ENCODE measurements at regions of chr12 and their contacts with region 1.

Region 1: DNA sequence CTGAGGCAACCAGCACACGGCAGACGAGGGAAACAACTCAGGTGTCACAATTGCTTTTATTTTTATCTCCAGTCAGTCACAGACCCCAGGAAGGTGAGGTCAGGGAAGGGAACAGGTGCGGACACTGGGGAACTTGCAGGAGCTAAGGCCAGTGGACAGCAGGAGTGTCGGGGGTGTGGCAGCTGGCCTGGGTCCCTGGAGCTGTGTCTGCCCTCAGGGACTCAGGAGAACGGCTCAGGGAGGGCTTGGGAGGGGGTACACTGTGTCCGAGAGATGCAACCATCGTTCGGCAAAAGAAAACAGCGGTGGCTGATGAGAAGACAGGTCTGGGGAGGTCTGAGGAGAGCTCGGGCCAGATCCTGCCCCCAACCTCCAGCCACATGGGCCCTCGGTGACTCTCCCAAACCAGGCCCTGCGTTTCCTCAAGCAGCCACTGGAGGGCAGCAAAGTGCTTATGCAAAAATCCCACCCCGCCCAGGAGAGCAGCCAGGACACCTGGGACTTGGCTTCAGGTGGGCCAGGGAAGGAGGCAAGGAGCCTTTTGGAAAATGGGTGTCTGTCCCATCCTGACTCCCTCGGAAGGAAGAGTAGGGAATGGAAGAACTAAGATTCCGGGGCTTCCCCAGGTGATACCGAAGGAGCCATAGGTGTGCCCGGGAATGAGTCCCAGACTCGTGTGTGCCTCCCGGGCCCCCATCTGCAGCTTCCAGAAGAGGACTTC is 24.1 kb upstream of the BCDIN3D start:
- DNase-seq: no peak
- ATAC-seq: peak; percentile 96
- H3K4me3 ChIP-seq: no peak overlapping the region
- H3K27ac ChIP-seq: no peak overlapping the region
- H3K4me1 ChIP-seq: no peaks in the 10 kb centered on the region
- H3K27me3 ChIP-seq: no peaks in the 10 kb centered on the region; a peak in 2 of 4 replicates
- CTCF ChIP-seq: peak; percentile 94 to 99 (median 99); a peak in 5 of 6 replicates
- EP300 ChIP-seq: no peak
- POLR2A ChIP-seq: no peak
- RAD21 ChIP-seq: peak; percentile 74

Region 2: DNA sequence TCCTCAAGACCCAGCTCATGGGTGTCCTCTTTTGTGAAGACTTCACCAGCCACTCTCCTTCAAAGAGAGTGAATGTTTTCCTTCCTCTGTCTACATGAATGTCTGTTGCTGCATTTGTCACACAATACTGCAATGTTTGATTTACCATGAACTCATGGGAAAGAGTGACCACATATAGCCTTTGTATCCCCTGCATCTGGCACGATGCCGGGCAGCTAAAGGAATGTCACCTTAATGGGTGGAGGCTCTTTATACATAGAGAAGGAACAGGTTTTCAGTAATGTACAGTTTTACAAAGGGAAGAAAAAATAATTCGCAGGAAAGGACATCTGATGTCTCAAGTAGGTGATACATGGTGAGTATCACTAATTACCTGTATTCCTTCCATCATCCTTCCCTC is 12.0 kb before region 1 on chr12:
- CTCF ChIA-PET with region 1: interaction called, 12 read pairs
- POLR2A ChIA-PET with region 1: no interaction called
- RAD21 ChIA-PET with region 1: no interaction called
- SMC1A ChIA-PET with region 1: no interaction called
- in situ Hi-C with region 1: no loop called
- intact Hi-C with region 1: no loop called
- DNase-seq: no peak
- ATAC-seq: no peak
- H3K4me3 ChIP-seq: no peak overlapping the region
- H3K27ac ChIP-seq: no peak overlapping the region
- H3K4me1 ChIP-seq: no peaks in the 10 kb centered on the region
- H3K27me3 ChIP-seq: no peaks in the 10 kb centered on the region
- CTCF ChIP-seq: no peak
- EP300 ChIP-seq: no peak
- POLR2A ChIP-seq: no peak
- RAD21 ChIP-seq: no peak

Region 3: GRCh38 chr12:49901026-49901425 is 34.0 kb after region 1 on chr12:
- CTCF ChIA-PET with region 1: no interaction called
- POLR2A ChIA-PET with region 1: no interaction called
- RAD21 ChIA-PET with region 1: no interaction called
- SMC1A ChIA-PET with region 1: no interaction called
- in situ Hi-C with region 1: no loop called
- intact Hi-C with region 1: no loop called
- DNase-seq: no peak
- ATAC-seq: no peak
- H3K4me3 ChIP-seq: no peak overlapping the region
- H3K27ac ChIP-seq: no peak overlapping the region
- H3K4me1 ChIP-seq: no peaks in the 10 kb centered on the region
- H3K27me3 ChIP-seq: peaks cover 7 to 12% of the 10 kb centered on the region in 2 experiments
- CTCF ChIP-seq: no peak
- EP300 ChIP-seq: no peak
- POLR2A ChIP-seq: no peak
- RAD21 ChIP-seq: no peak

Region 4: DNA sequence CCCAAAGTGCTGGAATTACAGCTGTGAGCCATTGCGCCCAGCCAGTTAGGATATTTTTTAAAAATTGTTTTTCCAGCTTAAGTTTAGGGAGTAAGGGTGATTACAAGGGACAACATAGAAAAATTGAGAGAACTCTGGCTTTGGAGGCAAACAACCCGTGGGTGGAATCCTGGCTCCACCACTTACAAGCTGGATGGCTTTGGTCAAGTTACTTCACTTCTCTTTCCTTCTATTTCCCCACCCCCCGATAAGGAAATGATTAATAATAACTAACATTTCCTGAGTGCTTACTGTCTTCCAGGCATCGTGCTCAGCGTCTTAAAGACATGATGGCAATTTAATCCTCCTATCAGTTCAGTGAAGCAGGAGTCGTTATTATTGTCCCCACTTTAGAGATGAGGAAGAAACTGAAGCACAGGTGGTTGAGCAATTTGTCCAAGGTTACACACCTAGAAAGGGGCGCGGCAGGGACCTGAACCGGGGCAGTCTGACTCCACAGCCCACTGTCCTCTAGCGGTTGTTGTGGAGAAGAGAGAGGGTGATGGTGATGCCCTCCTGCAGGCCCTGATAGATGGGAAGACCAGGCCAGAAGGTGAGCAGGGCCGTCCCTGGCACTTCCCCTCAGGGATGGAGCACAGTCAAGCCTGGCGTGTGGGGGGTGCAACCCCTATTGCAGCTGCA is 53.4 kb after region 1 on chr12:
- CTCF ChIA-PET with region 1: no interaction called
- POLR2A ChIA-PET with region 1: no interaction called
- RAD21 ChIA-PET with region 1: no interaction called
- SMC1A ChIA-PET with region 1: no interaction called
- in situ Hi-C with region 1: no loop called
- intact Hi-C with region 1: no loop called
- DNase-seq: no peak
- ATAC-seq: no peak
- H3K4me3 ChIP-seq: no peak overlapping the region
- H3K27ac ChIP-seq: no peak overlapping the region
- H3K4me1 ChIP-seq: no peaks in the 10 kb centered on the region
- H3K27me3 ChIP-seq: peaks cover 1 to 2% of the 10 kb centered on the region in 2 experiments; a peak in 2 of 4 replicates
- CTCF ChIP-seq: no peak
- EP300 ChIP-seq: no peak
- POLR2A ChIP-seq: no peak
- RAD21 ChIP-seq: no peak